ENCODE measurements at regions of chr2 and their contacts with region 1.

Region 1: DNA sequence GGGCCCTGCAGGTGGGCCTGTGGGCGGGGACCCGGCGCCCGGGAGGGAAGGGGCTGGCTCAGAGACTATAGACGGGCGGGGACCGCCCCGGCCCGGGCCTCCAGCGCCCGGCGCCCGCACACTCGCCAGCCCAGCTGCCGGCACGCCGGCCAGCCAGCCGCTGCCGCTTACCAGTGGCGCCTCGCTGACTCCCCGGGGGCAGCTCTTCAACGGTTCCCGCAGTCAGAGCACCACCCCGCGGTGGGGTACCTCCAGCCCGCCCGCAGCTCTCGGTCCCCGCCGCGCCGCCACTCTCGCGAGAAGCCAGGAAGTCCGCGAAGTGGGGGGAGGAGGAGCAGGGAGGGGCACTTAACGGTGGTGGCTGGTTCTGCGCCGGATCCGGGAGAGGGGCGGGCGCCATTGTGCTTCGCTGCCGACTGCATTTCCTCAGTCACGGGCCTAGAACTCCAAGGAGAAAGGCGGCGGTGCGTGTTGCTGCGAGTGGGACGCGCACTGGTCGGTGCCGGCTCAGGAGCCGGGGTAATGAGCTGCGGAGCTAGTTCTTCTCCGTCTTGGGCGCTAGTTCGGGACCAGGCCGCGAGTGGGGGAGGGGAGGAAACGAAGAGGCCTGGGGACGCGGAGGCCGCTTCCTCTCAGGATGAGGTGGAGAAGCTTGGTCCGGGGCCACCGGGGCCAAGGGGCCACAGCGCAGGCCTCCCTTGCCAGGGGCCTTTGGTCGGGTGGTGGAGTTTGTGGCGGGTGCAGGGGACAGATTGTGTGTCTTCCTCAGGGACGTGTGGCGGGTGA is at the start of gene MARCHF7:
- DNase-seq: peak; percentile 98
- H3K4me3 Mint-ChIP-seq: peak within 1 kb of the TSS; percentile 100
- H3K27ac Mint-ChIP-seq: peak within 1 kb of the TSS; percentile 99
- H3K4me1 Mint-ChIP-seq: peaks cover 15% of the 10 kb centered on the region
- H3K27me3 Mint-ChIP-seq: no peaks in the 10 kb centered on the region
- CTCF ChIP-seq: no peak
- total RNA-seq, gene MARCHF7: 74.8 and 81.9 TPM in 2 replicates

Region 2: DNA sequence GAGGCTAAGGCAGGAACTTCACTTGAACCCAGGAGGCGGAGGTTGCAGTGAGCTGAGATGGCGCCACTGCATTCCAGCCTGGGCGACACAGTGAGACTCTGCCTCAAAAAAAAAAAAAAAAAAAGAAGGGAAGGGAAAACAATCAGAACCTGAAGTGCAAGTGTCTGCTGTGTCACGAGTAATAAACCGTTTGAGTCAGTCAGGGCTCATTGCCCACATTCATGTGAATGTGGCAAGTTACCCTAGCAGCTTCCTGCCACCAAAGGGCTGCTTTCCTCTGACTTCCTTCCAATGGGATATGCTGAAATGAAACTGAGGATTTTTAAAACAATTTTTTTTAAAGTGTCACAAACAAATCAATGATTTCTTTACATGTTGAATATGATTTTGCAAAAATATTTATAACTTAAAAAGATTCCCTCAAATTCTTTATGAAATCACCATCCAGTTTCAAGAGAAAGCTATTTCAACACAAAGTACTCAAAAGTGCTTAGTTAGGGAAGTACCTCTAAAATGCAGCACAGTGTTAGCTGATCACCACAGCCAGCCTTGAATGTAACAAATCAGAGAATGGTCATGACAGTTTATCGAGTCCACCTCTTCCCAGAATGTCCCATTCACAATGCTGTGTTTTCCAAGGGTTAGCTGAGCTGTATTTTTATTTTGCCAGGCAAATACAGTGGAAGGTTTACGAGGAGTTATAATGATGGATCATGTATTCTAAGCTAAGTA is 462.2 kb before region 1 on chr2:
- CTCF ChIA-PET with region 1: interaction called, 5 read pairs
- intact Hi-C with region 1: loop called (anchors 10 kb)
- DNase-seq: peak; percentile 11
- H3K4me3 Mint-ChIP-seq: no peak overlapping the region
- H3K27ac Mint-ChIP-seq: no peak overlapping the region
- H3K4me1 Mint-ChIP-seq: peaks cover 7% of the 10 kb centered on the region
- H3K27me3 Mint-ChIP-seq: no peaks in the 10 kb centered on the region
- CTCF ChIP-seq: no peak

Region 3: GRCh38 chr2:159516241-159516766 is 196.0 kb before region 1 on chr2:
- CTCF ChIA-PET with region 1: no interaction called
- intact Hi-C with region 1: loop called (anchors 5 kb)
- DNase-seq: peak; percentile 37
- H3K4me3 Mint-ChIP-seq: peak overlapping the region; percentile 79
- H3K27ac Mint-ChIP-seq: peak overlapping the region; percentile 97
- H3K4me1 Mint-ChIP-seq: peaks cover 24% of the 10 kb centered on the region
- H3K27me3 Mint-ChIP-seq: no peaks in the 10 kb centered on the region
- CTCF ChIP-seq: no peak

Region 4: GRCh38 chr2:159557451-159558034 is 154.8 kb before region 1 on chr2:
- CTCF ChIA-PET with region 1: interaction called, 9 read pairs
- intact Hi-C with region 1: loop called (anchors 2 kb)
- DNase-seq: peak; percentile 7
- H3K4me3 Mint-ChIP-seq: no peak overlapping the region
- H3K27ac Mint-ChIP-seq: peak overlapping the region; percentile 26
- H3K4me1 Mint-ChIP-seq: peaks cover 12% of the 10 kb centered on the region
- H3K27me3 Mint-ChIP-seq: no peaks in the 10 kb centered on the region
- CTCF ChIP-seq: no peak

Region 5: DNA sequence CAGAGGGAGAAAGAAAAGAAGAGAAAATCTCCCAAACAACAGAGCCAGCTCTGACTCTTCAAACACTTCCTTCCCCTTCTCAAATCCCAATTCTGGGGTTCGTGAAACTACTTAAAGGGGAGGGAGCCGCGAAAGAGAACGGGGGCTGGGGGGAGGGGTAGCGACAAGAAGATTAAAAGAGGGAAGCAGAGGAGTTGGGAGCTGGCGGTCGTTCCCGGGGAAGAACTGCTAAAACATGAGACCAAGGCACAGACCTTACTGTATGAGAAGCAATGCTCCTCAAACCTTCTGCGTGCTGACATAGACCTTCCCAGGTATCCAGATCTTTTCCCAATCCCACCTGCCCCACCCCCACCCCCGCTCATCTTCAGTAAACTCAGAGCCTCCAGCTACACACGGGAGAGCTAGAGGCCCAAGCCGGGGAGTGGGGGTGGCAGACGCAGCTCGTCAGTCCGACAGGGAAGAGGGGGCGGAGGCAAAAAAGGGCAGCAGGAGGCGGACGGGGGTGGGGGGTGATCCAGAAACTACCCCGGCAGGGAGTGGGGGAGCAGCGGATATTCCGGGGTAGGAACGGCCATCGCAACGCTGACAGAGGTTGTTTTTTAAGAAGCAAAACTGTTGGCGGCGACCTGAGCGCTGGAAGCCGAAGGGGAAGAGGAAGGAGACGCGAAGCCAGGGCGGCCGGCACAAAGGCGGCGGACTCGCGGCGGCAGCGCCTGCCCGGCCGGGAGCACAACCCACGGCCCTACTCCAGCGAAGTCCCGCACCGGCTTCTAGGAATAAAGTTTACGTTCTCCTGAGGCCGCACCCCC is 97.0 kb before region 1 on chr2:
- CTCF ChIA-PET with region 1: no interaction called
- intact Hi-C with region 1: loop called (anchors 5 kb)
- DNase-seq: peak; percentile 88
- H3K4me3 Mint-ChIP-seq: peak overlapping the region; percentile 89
- H3K27ac Mint-ChIP-seq: peak overlapping the region; percentile 100
- H3K4me1 Mint-ChIP-seq: peaks cover 29% of the 10 kb centered on the region
- H3K27me3 Mint-ChIP-seq: no peaks in the 10 kb centered on the region
- CTCF ChIP-seq: no peak

Measured in Calu3 (cell line).